ENCODE measurements at regions of chr10 and their contacts with region 1.

Region 1: GRCh38 chr10:18140149-18140956 is at the start of gene CACNB2:
- DNase-seq: peak; percentile 70
- H3K4me3 ChIP-seq: peak within 1 kb of the TSS; percentile 79
- H3K27ac ChIP-seq: peak within 1 kb of the TSS; percentile 89
- H3K4me1 ChIP-seq: peaks cover 28% of the 10 kb centered on the region
- H3K27me3 ChIP-seq: peaks cover 32% of the 10 kb centered on the region
- CTCF ChIP-seq: no peak
- total RNA-seq, gene CACNB2: 38.1 TPM

Region 2: DNA sequence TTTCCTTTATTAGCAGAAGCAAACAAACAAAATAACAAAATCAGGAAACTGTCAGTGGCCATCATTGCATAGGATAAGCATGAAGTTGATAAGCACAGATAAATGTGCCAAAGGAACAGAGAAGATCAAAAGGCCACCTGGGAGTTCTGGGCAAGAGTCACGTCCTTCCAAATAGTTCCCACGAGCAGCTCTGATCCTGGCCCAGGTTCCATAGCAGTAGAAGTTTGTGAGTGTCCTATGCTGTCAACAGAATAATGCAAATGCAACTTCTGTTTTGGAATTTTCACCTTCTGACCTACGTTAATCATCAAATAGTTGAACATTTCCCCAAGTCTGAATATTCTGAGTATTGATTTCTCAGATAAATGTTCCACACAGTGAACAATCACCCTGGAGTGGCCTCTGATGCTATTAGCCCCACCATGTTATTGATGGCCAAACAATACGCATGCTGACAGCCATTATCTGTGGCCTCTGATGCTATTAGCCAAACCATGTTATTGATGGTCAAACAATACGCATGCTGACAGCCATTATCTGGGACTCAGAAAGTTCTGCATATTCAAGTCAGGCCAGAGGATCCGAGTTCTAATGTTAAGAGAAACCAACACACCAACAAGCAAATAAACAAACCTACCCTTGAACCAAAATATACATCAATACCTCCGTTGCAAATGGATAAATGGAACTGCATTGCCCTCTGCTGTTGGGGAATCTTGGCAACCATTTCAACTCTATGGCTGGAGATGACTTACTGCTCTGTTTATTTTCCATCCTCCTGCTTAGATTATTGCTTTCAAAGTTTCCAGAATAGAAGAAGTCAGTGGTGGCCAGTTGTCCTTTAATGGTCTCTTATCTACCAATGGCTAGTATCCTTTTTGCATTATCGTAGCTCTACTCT is 267.9 kb before region 1 on chr10:
- intact Hi-C with region 1: no loop called
- DNase-seq: no peak
- H3K4me3 ChIP-seq: no peak overlapping the region
- H3K27ac ChIP-seq: no peak overlapping the region
- H3K4me1 ChIP-seq: no peaks in the 10 kb centered on the region
- H3K27me3 ChIP-seq: no peaks in the 10 kb centered on the region
- CTCF ChIP-seq: peak; percentile 22

Region 3: GRCh38 chr10:18204039-18204835 is 63.9 kb after region 1 on chr10:
- intact Hi-C with region 1: loop called (anchors 10 kb)
- DNase-seq: no peak
- H3K4me3 ChIP-seq: no peak overlapping the region
- H3K27ac ChIP-seq: no peak overlapping the region
- H3K4me1 ChIP-seq: peaks cover 23% of the 10 kb centered on the region
- H3K27me3 ChIP-seq: no peaks in the 10 kb centered on the region
- CTCF ChIP-seq: no peak

Measured in left ventricle myocardium inferior (tissue), 1 donor.